Posterior cingulate gyrus (tissue), 11 donors: ENCODE measurements at regions of chr3 and their contacts with region 1.

Region 1: DNA sequence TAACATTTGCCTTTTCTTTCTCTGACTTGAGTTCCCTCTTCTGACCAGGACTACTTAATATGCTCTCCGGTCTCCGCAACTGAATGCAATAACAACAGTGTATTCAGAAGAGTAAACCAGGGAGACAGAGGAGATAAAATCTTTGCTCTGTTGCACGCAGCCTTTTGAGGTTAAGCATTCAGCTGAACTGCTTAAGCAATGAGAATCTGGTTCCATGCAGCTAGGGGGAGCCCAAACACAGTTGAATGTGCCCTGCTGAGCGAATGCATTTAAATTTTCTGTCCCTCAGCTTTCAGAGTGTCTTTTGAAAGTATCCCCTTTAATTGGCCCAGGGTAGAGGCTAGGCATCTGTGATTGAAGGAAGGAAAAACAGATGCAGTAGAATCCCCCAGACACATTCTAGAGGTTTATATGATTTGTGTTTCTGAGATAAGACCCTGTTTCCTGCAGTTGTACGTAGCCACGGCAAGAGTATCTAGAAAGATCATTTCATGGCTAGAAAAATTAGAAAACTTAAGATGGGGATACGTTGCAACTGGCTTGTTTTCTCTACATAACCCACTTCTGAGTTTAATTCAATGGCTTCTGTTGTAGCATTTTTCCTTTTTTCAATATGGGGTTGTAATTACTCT is 309.6 kb downstream of the TUSC7 start:
- DNase-seq: peak; percentile 42 to 95 (median 79)

Region 2: GRCh38 chr3:117059067-117059955 is 40.1 kb after region 1 on chr3:
- intact Hi-C with region 1: loop called (anchors 5 kb)
- DNase-seq: no peak

Region 3: DNA sequence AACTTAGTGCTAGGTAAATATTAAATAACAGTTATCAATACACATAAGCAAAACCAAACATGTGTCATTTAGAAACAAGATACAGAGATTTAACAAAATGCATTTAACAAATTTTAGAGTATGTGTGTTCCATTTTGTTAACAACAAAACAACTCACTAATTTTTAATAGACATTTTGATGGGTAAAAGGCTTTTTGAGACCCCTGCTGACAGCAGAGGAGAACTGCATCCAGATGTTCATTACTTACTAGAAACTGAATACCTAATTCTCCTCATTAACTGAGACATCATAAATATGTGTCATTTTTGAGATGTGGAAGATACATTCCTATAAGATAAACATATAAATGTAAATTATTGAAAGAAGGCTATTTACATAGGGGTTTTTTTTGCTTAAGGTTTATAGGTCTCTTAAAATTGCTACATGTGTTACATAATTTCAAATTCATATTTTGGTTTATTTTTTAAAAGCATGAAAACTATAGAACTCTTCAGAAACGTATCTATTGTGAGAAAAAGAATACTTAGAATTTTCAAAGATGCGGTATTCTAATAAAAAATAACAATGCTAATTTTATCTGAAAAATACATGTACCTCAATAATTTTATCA is 700.2 kb after region 1 on chr3:
- intact Hi-C with region 1: loop called (anchors 10 kb)
- DNase-seq: peak in 1 of 10 donors; percentile 7